ENCODE measurements at regions of chr1 and their contacts with region 1.

Region 1: GRCh38 chr1:203304919-203305808 is at the start of gene BTG2:
- DNase-seq: peak; percentile 79 to 97 (median 93)
- ATAC-seq: peak; percentile 80
- H3K4me3 ChIP-seq: peak within 1 kb of the TSS; percentile 98 to 99
- H3K4me3 Mint-ChIP-seq: peak within 1 kb of the TSS; percentile 94
- H3K27ac ChIP-seq: peak within 1 kb of the TSS; percentile 94 to 99
- H3K27ac Mint-ChIP-seq: peak within 1 kb of the TSS; percentile 97
- H3K4me1 ChIP-seq: peaks cover 44% of the 10 kb centered on the region
- H3K4me1 Mint-ChIP-seq: peaks cover 58% of the 10 kb centered on the region
- H3K27me3 ChIP-seq: no peaks in the 10 kb centered on the region
- H3K27me3 Mint-ChIP-seq: no peaks in the 10 kb centered on the region
- CTCF ChIP-seq: no peak
- total RNA-seq, gene BTG2: 751 to 765 TPM

Region 2: GRCh38 chr1:202957733-202958543 is 347.2 kb before region 1 on chr1 and contains the start of gene ADIPOR1:
- CTCF ChIA-PET with region 1: no interaction called
- POLR2A ChIA-PET with region 1: no interaction called
- intact Hi-C with region 1: loop called in 1 of 2 experiments (anchors 5 kb)
- DNase-seq: peak; percentile 89 to 96 (median 94)
- ATAC-seq: peak; percentile 97
- H3K4me3 ChIP-seq: peak within 1 kb of the TSS; percentile 89 to 93
- H3K4me3 Mint-ChIP-seq: peak within 1 kb of the TSS; percentile 81
- H3K27ac ChIP-seq: peak within 1 kb of the TSS; percentile 89 to 94
- H3K27ac Mint-ChIP-seq: peak within 1 kb of the TSS; percentile 92
- H3K4me1 ChIP-seq: peaks cover 36% of the 10 kb centered on the region
- H3K4me1 Mint-ChIP-seq: peaks cover 46% of the 10 kb centered on the region
- H3K27me3 ChIP-seq: no peaks in the 10 kb centered on the region
- H3K27me3 Mint-ChIP-seq: no peaks in the 10 kb centered on the region
- CTCF ChIP-seq: no peak
- total RNA-seq, gene ADIPOR1: 106 to 117 TPM

Region 3: DNA sequence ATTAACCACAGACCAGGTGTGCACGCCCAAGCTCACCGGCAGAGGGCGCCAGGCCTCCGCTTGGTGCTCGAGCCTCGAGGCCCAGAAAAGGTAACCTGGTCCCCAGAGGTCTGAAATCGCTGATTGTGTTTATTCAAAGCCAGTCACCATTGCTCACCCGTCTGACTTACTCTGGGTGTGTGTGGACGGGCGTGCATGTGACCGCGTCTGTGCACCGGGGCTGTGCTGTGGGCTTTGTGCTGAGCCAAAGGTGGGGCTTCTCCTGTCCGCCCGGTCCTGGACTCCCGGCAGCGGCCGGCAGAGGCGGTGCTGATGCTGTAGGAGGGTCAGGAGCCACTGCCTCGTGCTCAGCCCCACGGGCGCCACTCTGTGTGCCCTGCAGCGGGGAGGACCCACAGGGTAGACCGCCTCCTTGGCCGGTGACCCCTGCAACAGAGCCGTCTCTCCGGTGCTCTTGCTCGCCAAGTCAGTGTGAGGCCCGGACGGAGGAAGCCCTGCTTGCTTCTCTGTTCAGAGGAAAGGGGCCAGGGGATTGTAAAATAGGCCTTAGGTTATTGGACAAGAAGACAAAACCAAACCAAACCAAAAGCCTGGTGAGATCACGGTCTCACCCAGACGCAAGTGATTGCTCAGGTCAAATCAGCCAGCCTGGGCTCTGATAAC is 31.8 kb before region 1 on chr1:
- CTCF ChIA-PET with region 1: interaction called, 320 read pairs
- POLR2A ChIA-PET with region 1: interaction called, 124 read pairs
- intact Hi-C with region 1: loop called (anchors 1 kb)
- DNase-seq: peak; percentile 82 to 97 (median 92)
- ATAC-seq: peak; percentile 66
- H3K4me3 ChIP-seq: peak overlapping the region; percentile 37 to 63
- H3K4me3 Mint-ChIP-seq: peak overlapping the region; percentile 74
- H3K27ac ChIP-seq: peak overlapping the region; percentile 10 to 48
- H3K27ac Mint-ChIP-seq: peak overlapping the region; percentile 92
- H3K4me1 ChIP-seq: peaks cover 49% of the 10 kb centered on the region
- H3K4me1 Mint-ChIP-seq: peaks cover 52% of the 10 kb centered on the region
- H3K27me3 ChIP-seq: no peaks in the 10 kb centered on the region
- H3K27me3 Mint-ChIP-seq: no peaks in the 10 kb centered on the region
- CTCF ChIP-seq: peak; percentile 94

Region 4: GRCh38 chr1:203290261-203291089 is 14.7 kb before region 1 on chr1:
- CTCF ChIA-PET with region 1: interaction called, 55 read pairs
- POLR2A ChIA-PET with region 1: interaction called, 34 read pairs
- intact Hi-C with region 1: loop called (anchors 1 kb)
- DNase-seq: peak; percentile 94 to 99 (median 98)
- ATAC-seq: peak; percentile 60
- H3K4me3 ChIP-seq: peak overlapping the region; percentile 29 to 61
- H3K4me3 Mint-ChIP-seq: peak overlapping the region; percentile 72
- H3K27ac ChIP-seq: peak overlapping the region; percentile 99 to 100
- H3K27ac Mint-ChIP-seq: peak overlapping the region; percentile 98
- H3K4me1 ChIP-seq: peaks cover 67% of the 10 kb centered on the region
- H3K4me1 Mint-ChIP-seq: peaks cover 85% of the 10 kb centered on the region
- H3K27me3 ChIP-seq: no peaks in the 10 kb centered on the region
- H3K27me3 Mint-ChIP-seq: no peaks in the 10 kb centered on the region
- CTCF ChIP-seq: no peak

Region 5: DNA sequence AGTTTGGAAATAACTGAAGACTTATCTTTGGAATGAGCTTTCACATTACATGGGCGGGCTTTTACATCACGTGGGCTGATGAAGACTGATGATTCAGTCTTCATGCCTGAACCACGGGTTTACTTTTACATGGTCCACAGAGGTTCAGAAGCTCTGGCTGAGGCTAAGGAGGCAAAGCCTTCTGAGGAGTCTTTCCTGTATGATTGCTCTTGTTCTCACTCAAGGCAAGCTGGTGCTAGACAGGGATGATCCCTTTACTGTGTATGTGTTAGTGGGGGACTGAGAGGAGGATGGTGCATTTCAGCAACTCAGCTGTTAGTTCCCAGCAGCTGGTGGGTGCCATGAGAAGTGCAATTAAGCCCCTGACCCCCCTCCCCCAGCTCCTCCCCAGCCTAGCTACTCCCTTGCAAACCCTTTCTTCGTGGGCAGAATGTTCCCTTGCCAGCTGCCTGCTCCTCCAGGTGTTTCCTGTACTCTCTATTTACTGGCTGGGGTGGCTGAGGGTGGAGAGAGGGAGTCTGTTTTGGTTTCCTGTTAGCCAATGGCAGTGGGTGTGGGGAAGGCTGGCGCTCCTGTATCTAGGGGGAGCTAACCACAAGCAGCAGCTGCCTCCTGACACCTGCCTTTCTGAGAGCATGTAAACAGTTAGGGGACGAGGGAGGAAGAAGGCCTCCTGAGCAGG is 15.6 kb after region 1 on chr1:
- CTCF ChIA-PET with region 1: interaction called, 243 read pairs
- POLR2A ChIA-PET with region 1: interaction called, 512 read pairs
- intact Hi-C with region 1: loop called in 1 of 2 experiments (anchors 1 kb)
- DNase-seq: peak; percentile 50 to 91 (median 82)
- ATAC-seq: peak; percentile 62
- H3K4me3 ChIP-seq: peak overlapping the region in 1 of 2 experiments; percentile 12
- H3K4me3 Mint-ChIP-seq: peak overlapping the region; percentile 69
- H3K27ac ChIP-seq: peak overlapping the region; percentile 53 to 80
- H3K27ac Mint-ChIP-seq: peak overlapping the region; percentile 93
- H3K4me1 ChIP-seq: peaks cover 73% of the 10 kb centered on the region
- H3K4me1 Mint-ChIP-seq: peaks cover 88% of the 10 kb centered on the region
- H3K27me3 ChIP-seq: no peaks in the 10 kb centered on the region
- H3K27me3 Mint-ChIP-seq: no peaks in the 10 kb centered on the region
- CTCF ChIP-seq: no peak

Region 6: DNA sequence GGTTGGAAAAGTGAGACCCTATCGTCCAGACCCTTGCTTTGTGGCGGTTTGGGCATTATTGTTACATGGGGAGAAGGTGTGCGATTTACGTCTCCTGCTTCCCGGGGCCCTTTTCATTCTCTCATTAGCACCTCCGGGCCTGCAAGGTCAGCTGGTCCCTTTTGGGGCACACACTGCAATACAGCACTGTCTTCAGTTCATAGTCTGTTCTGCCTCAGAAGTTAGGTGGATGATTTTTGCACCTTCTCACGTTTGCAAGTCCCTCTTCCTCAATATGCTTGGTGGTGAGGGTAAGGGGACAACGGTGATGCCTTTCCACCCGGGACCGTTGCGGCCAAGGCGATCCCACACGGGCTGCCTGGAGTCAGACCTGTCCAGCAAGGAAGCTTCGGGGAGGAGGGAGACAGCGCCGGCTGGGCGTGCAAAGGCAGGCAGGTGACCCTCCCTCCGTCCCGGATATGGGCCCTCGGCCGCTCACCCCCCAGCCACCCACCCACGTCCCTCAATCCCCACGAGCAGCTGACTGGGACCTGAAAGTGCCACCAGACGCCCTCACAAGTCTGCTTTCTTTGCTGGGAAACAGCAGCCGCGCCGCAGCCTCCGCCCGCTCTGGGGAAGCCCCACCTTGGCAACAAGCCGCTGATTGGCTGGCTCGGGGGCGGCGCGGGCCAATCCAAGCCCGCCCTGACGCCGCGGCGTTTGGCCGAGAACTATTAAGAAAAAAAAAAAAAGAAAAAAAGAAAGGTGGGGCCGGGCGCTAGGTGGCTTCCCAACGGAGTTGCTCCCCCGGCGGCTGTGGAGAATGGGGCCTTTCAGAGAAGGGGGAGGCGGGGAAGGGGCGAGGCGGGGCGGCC is 21.9 kb after region 1 on chr1:
- CTCF ChIA-PET with region 1: interaction called, 263 read pairs
- POLR2A ChIA-PET with region 1: interaction called, 512 read pairs
- intact Hi-C with region 1: loop called (anchors 1 kb)
- DNase-seq: peak; percentile 86 to 97 (median 94)
- ATAC-seq: peak; percentile 67
- H3K4me3 ChIP-seq: peak overlapping the region; percentile 58 to 60
- H3K4me3 Mint-ChIP-seq: peak overlapping the region; percentile 74
- H3K27ac ChIP-seq: peak overlapping the region; percentile 92 to 97
- H3K27ac Mint-ChIP-seq: peak overlapping the region; percentile 93
- H3K4me1 ChIP-seq: peaks cover 65% of the 10 kb centered on the region
- H3K4me1 Mint-ChIP-seq: peaks cover 65% of the 10 kb centered on the region
- H3K27me3 ChIP-seq: no peaks in the 10 kb centered on the region
- H3K27me3 Mint-ChIP-seq: no peaks in the 10 kb centered on the region
- CTCF ChIP-seq: no peak